Activated CD4-positive, alpha-beta memory T cell treated with anti-CD3 and anti-CD28 coated beads, Interleukin-2, amount 10 ng/mL, durations not matched to agents 7 days and 5 days (primary cell): ENCODE measurements at regions of chr6 and their contacts with region 1.

Region 1: DNA sequence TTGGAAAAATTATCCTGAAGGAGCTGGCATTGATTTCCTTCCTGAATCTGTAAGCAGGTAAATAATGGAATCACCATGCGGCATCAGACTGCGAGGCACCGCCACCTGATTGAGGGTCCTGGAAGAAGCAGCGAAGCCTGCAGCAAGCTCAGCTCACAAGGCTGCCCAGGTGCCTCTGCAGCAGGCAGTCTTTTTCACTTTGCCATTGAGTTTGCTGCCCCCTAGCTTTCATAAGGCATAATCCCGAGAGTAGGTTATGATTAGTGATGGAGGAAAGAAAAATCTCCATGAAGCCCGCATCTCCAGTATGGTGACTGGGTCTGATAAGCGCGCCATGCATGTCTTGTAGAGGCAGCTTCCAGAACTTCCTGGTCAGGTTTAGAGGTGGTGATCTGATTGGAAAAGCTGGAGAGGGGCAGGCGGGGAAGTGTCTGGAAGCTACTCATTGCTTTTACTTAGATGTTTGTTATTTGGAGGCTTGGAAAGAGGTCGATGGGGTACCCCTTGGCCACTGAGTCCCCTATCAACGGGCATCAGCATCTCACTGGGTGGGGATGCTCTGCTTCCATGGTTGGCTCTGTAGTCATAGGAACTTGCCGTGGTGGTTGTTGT is 26.7 kb downstream of the IYD start:
- DNase-seq: peak; percentile 38
- H3K4me3 Mint-ChIP-seq: no peak overlapping the region
- H3K27ac Mint-ChIP-seq: no peak overlapping the region
- H3K4me1 Mint-ChIP-seq: no peaks in the 10 kb centered on the region
- H3K27me3 Mint-ChIP-seq: peaks cover 17% of the 10 kb centered on the region

Region 2: GRCh38 chr6:150068720-150069648 is 326.5 kb before region 1 on chr6 and contains the start of gene ULBP3:
- CTCF ChIA-PET with region 1: interaction called, 10 read pairs
- POLR2A ChIA-PET with region 1: no interaction called
- DNase-seq: peak; percentile 78
- H3K4me3 Mint-ChIP-seq: peak within 1 kb of the TSS; percentile 69
- H3K27ac Mint-ChIP-seq: no peak within 1 kb of the TSS
- H3K4me1 Mint-ChIP-seq: peaks cover 43% of the 10 kb centered on the region
- H3K27me3 Mint-ChIP-seq: peaks cover 19% of the 10 kb centered on the region
- total RNA-seq, gene ULBP3: 2.2 to 3.5 TPM

Region 3: DNA sequence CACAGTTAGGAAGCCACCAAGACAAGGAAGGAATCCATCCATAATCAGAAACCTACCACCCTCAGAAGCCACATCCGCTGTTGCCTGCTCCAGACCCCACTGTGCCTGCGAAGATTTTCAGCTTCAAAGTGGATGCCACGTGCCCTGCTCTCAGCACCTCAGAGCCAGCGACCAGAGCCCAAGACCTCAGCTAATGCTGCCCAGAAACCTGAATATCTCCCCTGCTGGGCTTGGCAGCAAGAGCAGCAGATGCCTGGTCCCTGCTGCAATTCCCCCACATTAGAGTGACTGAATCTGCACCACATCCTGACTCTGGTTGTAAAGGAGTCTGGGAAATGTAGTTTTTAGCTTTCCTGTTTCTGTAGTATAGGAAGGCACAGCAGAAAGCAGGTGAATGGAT is 315.9 kb before region 1 on chr6:
- CTCF ChIA-PET with region 1: interaction called, 82 read pairs
- POLR2A ChIA-PET with region 1: no interaction called
- DNase-seq: peak; percentile 57
- H3K4me3 Mint-ChIP-seq: no peak overlapping the region
- H3K27ac Mint-ChIP-seq: peak overlapping the region; percentile 43
- H3K4me1 Mint-ChIP-seq: peaks cover 34% of the 10 kb centered on the region
- H3K27me3 Mint-ChIP-seq: peaks cover 35% of the 10 kb centered on the region

Region 4: DNA sequence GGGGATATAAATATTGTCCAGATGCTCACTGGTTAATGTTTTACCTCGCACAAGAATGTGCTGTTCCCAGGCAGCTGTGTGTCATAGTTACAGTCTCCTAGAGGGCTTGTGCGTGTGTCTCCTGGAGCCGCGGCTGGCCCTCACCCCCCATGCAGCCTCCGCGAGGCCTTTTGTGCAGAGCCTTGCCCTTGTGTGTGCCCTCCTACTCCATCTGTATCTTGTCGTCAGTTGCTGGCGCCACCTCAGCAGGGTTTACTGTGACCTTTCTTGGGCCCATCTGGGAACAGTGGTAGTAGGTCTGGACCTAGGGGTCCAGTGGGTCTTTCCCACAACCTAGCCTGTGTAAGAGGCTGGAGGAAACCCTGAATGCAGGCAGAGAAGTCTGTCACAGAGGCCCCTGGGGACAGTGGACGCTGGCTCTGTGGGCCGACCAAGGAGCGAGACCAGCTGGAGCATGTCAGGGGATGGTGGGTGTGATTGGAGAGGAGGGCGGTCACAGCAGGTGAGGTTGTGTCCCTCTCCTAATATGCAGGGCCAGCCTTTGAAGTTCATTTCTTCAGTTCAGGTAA is 217.5 kb before region 1 on chr6:
- CTCF ChIA-PET with region 1: no interaction called
- POLR2A ChIA-PET with region 1: no interaction called
- DNase-seq: no peak
- H3K4me3 Mint-ChIP-seq: no peak overlapping the region
- H3K27ac Mint-ChIP-seq: no peak overlapping the region
- H3K4me1 Mint-ChIP-seq: peaks cover 5% of the 10 kb centered on the region
- H3K27me3 Mint-ChIP-seq: peaks cover 3% of the 10 kb centered on the region

Region 5: DNA sequence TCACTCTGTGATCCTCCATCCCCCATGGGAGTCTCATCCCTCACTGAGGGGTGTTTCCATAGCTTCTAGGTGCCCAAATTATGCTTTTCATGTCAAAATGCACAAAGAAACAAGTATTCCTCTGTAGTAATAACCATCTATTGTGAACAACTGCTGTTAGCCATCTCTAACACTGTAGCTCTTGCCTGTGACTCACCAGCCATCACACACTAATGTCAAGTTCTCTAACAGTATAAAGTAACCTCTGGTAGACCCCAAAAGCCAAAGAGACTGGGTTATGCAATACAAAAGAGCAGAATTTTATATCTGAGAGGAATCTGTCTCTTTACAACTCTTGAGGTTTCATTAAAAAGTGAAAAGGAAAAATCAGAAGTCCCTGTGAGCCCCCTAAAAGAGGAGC is 52.1 kb before region 1 on chr6:
- CTCF ChIA-PET with region 1: interaction called, 10 read pairs
- POLR2A ChIA-PET with region 1: no interaction called
- DNase-seq: no peak
- H3K4me3 Mint-ChIP-seq: no peak overlapping the region
- H3K27ac Mint-ChIP-seq: no peak overlapping the region
- H3K4me1 Mint-ChIP-seq: no peaks in the 10 kb centered on the region
- H3K27me3 Mint-ChIP-seq: peaks cover 12% of the 10 kb centered on the region

Region 6: GRCh38 chr6:150380256-150380655 is 15.2 kb before region 1 on chr6:
- CTCF ChIA-PET with region 1: interaction called, 22 read pairs
- POLR2A ChIA-PET with region 1: no interaction called
- DNase-seq: no peak
- H3K4me3 Mint-ChIP-seq: no peak overlapping the region
- H3K27ac Mint-ChIP-seq: no peak overlapping the region
- H3K4me1 Mint-ChIP-seq: peaks cover 2% of the 10 kb centered on the region
- H3K27me3 Mint-ChIP-seq: peaks cover 53% of the 10 kb centered on the region

Region 7: DNA sequence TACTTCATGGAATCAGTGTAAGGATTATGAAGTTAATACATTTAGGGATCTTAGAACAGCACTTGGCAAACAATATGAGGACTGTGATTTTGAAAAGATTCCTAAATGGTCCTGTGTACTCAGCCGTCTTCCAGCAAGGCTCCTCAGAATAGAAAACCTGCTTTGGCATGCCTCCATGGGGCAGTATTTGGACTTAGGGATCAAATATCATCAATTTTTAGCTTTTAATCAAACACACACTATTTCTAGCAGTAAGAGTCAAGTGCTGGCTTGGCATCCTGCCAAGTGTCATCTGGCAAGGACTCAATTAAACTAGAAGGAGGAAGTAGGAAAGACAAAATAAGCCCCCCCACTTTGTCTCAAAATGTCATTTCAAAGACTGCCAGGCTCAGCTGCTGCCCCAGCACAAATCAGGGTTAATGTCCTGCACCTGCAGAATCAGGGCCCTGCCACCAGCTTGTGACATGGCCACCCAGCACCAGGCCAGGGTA is 14.1 kb after region 1 on chr6:
- CTCF ChIA-PET with region 1: interaction called, 27 read pairs
- POLR2A ChIA-PET with region 1: no interaction called
- DNase-seq: no peak
- H3K4me3 Mint-ChIP-seq: no peak overlapping the region
- H3K27ac Mint-ChIP-seq: no peak overlapping the region
- H3K4me1 Mint-ChIP-seq: no peaks in the 10 kb centered on the region
- H3K27me3 Mint-ChIP-seq: peaks cover 48% of the 10 kb centered on the region

Region 8: GRCh38 chr6:150503586-150504339 is 108.3 kb after region 1 on chr6:
- CTCF ChIA-PET with region 1: no interaction called
- POLR2A ChIA-PET with region 1: no interaction called
- DNase-seq: no peak
- H3K4me3 Mint-ChIP-seq: no peak overlapping the region
- H3K27ac Mint-ChIP-seq: no peak overlapping the region
- H3K4me1 Mint-ChIP-seq: no peaks in the 10 kb centered on the region
- H3K27me3 Mint-ChIP-seq: peaks cover 5% of the 10 kb centered on the region

Region 9: DNA sequence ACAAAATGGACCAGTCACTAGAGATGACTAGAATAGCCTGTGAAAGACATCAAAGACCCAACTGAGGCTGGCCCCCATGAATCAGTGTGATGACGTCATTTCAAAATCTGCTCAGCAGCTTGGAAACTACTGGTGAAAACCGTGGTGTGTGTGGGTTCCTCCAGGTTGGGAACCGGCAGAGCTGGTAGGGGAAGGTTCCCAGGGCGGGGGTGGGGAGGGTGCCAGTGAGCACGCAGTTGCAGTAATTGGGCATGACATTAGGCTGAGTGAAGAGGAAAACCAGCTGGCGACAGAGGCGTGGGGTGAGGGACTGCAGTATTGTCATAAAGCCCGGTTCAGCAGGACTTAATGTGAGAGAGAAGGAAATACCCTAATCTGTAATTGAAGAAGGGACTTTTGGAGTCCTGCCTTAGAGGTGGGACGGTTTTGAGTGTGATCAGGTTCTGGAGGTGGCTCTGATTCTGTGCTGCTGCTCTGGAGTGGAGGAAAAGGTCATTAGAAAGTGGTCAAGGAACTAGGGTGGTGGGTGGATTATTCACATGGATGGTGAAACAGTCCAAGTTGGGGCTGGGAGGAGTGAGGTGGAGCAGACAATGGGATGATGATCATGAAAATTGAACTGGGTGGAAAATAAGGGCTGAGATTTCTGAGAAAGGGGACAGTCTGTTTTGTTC is 418.0 kb after region 1 on chr6:
- CTCF ChIA-PET with region 1: interaction called, 16 read pairs
- POLR2A ChIA-PET with region 1: no interaction called
- DNase-seq: peak; percentile 21
- H3K4me3 Mint-ChIP-seq: no peak overlapping the region
- H3K27ac Mint-ChIP-seq: peak overlapping the region; percentile 70
- H3K4me1 Mint-ChIP-seq: peaks cover 23% of the 10 kb centered on the region
- H3K27me3 Mint-ChIP-seq: peaks cover 6% of the 10 kb centered on the region

Region 10: DNA sequence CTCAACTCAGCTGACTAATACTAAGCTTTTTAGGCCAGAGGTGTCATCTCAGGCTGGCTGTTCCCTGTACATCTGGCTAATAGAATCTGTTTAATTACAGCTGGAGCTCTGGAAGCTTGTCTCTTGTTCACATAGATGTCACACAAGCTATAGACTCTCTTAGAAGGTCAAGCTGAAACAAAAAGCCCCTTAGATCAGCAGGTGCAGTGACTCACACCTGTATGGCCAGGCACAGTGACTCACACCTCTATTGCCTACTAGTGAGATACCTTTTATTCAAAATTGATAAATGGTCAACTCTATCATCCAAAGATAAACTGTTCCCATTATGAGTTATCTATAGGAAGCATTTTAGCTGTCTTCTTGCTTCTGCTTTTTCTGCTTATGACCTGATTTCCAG is 440.1 kb after region 1 on chr6:
- CTCF ChIA-PET with region 1: no interaction called
- POLR2A ChIA-PET with region 1: no interaction called
- DNase-seq: no peak
- H3K4me3 Mint-ChIP-seq: no peak overlapping the region
- H3K27ac Mint-ChIP-seq: no peak overlapping the region
- H3K4me1 Mint-ChIP-seq: no peaks in the 10 kb centered on the region
- H3K27me3 Mint-ChIP-seq: no peaks in the 10 kb centered on the region

Region 11: GRCh38 chr6:151390276-151391032 is 995.0 kb after region 1 on chr6:
- CTCF ChIA-PET with region 1: no interaction called
- POLR2A ChIA-PET with region 1: no interaction called
- DNase-seq: peak; percentile 99
- H3K4me3 Mint-ChIP-seq: peak overlapping the region; percentile 64
- H3K27ac Mint-ChIP-seq: peak overlapping the region; percentile 85
- H3K4me1 Mint-ChIP-seq: peaks cover 65% of the 10 kb centered on the region
- H3K27me3 Mint-ChIP-seq: no peaks in the 10 kb centered on the region